ENCODE measurements at regions of chr11 and their contacts with region 1.

Region 1: GRCh38 chr11:45110562-45110961 is 35.9 kb upstream of the PRDM11 start:
- DNase-seq: peak; percentile 28 to 65
- H3K4me3 ChIP-seq: no peak overlapping the region
- H3K27ac ChIP-seq: no peak overlapping the region
- H3K4me1 ChIP-seq: no peaks in the 10 kb centered on the region
- H3K27me3 ChIP-seq: no peaks in the 10 kb centered on the region
- CTCF ChIP-seq: peak; percentile 72 to 88 (median 85)
- POLR2A ChIP-seq: no peak

Region 2: DNA sequence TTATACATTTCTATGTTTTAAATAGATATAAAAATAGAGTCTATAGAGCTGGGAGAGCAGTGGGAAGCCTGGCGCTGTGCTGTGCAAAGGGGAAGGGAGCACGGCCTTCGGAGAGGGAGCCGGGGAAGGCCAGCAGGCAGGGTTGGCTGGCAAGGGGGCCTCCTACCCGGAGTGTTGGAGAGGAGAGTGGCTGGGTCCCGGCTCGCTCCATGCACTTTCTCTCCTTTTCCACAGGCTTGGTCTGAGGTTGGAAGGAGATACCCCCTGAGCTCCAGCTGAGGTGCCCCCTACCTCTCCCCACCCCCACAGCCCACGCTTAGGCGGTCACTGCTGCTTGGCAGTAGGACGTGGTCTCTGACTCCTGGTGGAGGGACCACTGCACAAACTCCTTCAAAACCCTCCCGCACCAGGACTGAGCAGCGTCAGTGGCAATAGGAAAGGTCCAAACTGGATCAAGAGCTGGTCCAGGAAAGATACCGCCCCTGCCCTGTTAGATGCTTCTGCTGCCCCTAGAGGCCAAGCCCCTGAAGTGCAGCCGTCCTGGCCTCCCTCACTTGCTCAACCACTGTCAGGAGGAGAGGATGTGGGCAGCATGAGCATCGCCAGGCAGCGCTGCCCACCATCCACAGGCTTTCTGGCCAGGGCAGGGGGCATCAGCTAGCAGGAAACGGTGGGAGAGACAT is 122.7 kb after region 1 on chr11:
- intact Hi-C with region 1: loop called (anchors 10 kb)
- DNase-seq: peak; percentile 77 to 78
- H3K4me3 ChIP-seq: no peak overlapping the region
- H3K27ac ChIP-seq: no peak overlapping the region
- H3K4me1 ChIP-seq: no peaks in the 10 kb centered on the region
- H3K27me3 ChIP-seq: no peaks in the 10 kb centered on the region
- CTCF ChIP-seq: peak; percentile 67 to 90 (median 76)
- POLR2A ChIP-seq: no peak

Region 3: GRCh38 chr11:45278714-45279113 is 168.2 kb after region 1 on chr11:
- intact Hi-C with region 1: no loop called
- DNase-seq: no peak
- H3K4me3 ChIP-seq: no peak overlapping the region
- H3K27ac ChIP-seq: no peak overlapping the region
- H3K4me1 ChIP-seq: no peaks in the 10 kb centered on the region
- H3K27me3 ChIP-seq: no peaks in the 10 kb centered on the region
- CTCF ChIP-seq: no peak
- POLR2A ChIP-seq: no peak

Region 4: GRCh38 chr11:45332276-45332934 is 221.8 kb after region 1 on chr11:
- intact Hi-C with region 1: loop called (anchors 5 kb)
- DNase-seq: peak; percentile 52 to 58
- H3K4me3 ChIP-seq: no peak overlapping the region
- H3K27ac ChIP-seq: peak overlapping the region; percentile 69 to 70
- H3K4me1 ChIP-seq: no peaks in the 10 kb centered on the region
- H3K27me3 ChIP-seq: no peaks in the 10 kb centered on the region
- CTCF ChIP-seq: peak; percentile 57 to 87 (median 77)
- POLR2A ChIP-seq: no peak